Activated CD8-positive, alpha-beta memory T cell treated with anti-CD3 and anti-CD28 coated beads, Interleukin-2, amount 10 ng/mL, durations not matched to agents 7 days and 5 days (primary cell): ENCODE measurements at regions of chr1 and their contacts with region 1.

Region 1: DNA sequence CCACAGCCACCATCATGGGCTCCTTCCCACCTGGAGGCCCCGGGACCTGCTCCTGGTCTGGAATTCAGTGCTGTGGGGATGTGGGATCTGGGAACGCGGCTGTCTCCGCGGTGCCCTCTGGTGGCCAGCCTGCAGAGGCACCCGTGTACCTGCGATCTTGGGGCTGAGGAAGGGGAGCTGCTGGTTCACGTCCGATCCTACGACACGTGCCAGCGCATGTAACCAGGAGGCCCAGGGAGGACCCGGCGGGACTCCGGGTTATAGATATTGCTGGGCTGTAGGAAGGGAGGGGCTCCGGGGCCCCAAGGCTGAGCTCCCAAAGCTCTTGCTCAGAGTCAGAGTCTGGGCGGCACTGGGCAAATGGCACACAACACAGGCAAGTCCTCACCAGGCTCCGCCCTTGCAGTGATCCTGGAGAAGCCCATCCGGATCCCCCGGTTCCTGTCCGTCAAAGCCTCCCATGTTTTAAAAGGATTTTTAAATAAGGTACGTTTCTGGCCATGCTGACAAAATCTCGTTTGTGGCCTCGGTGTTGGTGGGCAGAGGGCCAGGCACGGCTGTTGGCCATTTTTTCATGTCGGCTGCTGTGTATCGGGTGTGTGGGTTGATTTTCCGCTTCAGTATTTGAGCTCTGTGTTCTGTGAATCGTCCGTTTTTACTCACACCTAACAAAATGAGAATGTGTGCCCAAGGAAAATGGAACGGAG is 20.1 kb downstream of the FAAP20 start:
- DNase-seq: no peak
- ATAC-seq: peak; percentile 75
- H3K4me3 Mint-ChIP-seq: no peak overlapping the region
- H3K27ac Mint-ChIP-seq: no peak overlapping the region
- H3K4me1 Mint-ChIP-seq: peaks cover 2% of the 10 kb centered on the region
- H3K27me3 Mint-ChIP-seq: no peaks in the 10 kb centered on the region

Region 2: DNA sequence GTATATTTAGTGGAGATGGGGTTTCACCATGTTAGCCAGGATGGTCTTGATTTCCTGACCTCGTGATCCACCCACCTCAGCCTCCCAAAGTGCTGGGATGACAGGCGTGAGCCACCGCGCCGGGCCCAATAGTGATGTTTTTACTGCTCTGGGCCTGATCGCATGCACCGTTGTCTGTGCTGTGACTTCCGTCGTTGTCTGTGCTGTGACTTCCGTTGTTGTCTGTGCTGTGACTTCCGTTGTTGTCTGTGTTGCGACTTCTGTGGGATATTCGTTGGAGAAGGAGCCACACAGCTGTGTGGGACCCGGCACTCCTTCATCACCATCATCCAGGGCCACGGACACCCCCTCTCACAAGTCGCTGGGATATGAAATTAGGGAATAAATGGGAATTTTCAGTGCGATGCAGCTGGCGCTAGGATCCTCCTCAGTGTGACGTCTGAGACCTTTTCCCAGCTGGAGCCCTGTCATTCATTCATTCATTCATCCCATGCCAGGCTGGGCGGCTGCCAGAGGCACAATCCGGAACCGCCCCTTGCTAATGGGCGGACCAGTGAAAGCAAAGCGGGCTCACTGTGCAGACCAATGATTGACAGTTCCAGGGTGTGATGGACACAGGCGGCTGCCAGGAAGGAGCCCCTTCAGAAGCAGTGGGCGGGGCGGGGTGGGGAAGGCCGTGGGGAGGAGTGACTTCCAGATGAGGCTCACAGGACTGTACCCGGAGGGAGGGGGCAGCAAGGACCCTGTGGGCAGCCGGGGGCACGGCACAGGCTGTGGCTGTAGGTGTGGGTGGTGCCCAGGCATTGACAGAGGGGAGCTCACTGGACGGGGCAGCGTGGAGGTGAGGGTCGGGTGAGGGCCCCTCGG is 75.4 kb before region 1 on chr1:
- CTCF ChIA-PET with region 1: no interaction called
- DNase-seq: no peak
- ATAC-seq: no peak
- H3K4me3 Mint-ChIP-seq: no peak overlapping the region
- H3K27ac Mint-ChIP-seq: no peak overlapping the region
- H3K4me1 Mint-ChIP-seq: no peaks in the 10 kb centered on the region
- H3K27me3 Mint-ChIP-seq: no peaks in the 10 kb centered on the region

Region 3: GRCh38 chr1:2133039-2133878 is 41.2 kb before region 1 on chr1:
- CTCF ChIA-PET with region 1: interaction called, 19 read pairs
- DNase-seq: peak; percentile 98
- ATAC-seq: peak; percentile 93
- H3K4me3 Mint-ChIP-seq: peak overlapping the region; percentile 73
- H3K27ac Mint-ChIP-seq: peak overlapping the region; percentile 75
- H3K4me1 Mint-ChIP-seq: peaks cover 15% of the 10 kb centered on the region
- H3K27me3 Mint-ChIP-seq: no peaks in the 10 kb centered on the region

Region 4: GRCh38 chr1:2148691-2149090 is 25.8 kb before region 1 on chr1:
- CTCF ChIA-PET with region 1: interaction called, 17 read pairs
- DNase-seq: peak; percentile 90
- ATAC-seq: peak; percentile 83
- H3K4me3 Mint-ChIP-seq: no peak overlapping the region
- H3K27ac Mint-ChIP-seq: no peak overlapping the region
- H3K4me1 Mint-ChIP-seq: peaks cover 20% of the 10 kb centered on the region
- H3K27me3 Mint-ChIP-seq: no peaks in the 10 kb centered on the region

Region 5: DNA sequence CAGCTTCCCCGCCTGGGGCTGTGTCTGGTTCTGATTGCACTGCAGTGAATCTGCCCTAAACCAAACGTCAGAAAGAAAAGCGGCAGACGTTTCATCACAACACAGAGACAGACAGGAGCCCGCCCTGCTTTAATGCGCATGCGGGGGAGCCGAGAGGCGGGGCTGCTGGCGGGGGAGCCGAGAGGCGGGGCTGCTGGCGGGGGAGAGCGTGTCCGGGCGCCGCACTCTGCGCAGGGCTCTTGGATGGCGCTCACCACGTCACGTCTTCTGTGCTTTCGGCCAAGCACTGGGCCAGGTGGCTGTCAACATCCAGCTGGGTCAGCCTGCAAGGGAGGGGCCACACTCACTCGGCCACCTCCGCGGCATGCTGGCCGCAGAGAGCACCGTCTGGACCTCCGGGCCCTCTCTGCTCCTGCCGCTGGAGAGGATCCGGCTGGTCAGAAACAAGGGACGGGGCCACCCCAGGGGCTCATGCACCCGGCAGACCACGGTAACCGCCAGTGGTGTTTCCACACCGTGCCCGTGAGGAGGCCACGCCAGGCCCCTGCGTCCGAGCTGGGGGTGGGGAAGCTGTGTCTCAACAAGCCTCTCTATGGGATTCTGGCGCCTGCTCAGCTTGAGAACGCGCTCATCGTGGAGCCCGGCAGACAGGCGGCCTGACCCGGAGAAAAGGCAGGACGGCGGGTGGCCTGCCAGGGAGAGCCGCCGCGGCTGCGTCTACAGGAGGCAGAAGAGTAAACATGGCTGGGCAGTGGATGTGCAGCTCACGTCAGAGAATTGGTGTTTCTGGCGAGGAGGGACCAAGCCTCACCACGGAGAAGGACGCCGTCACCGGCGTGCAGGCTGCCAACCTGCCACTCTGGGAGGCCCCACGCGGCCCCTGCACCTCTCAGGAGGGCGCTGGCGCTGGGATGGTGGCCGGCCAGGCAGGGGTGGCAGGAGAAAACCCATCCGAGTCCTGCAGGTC is 15.2 kb after region 1 on chr1:
- CTCF ChIA-PET with region 1: interaction called, 24 read pairs
- DNase-seq: peak; percentile 92
- ATAC-seq: peak; percentile 93
- H3K4me3 Mint-ChIP-seq: peak overlapping the region; percentile 69
- H3K27ac Mint-ChIP-seq: peak overlapping the region; percentile 90
- H3K4me1 Mint-ChIP-seq: peaks cover 13% of the 10 kb centered on the region
- H3K27me3 Mint-ChIP-seq: no peaks in the 10 kb centered on the region